Heart right ventricle (tissue), 16 donors: ENCODE measurements at regions of chr2 and their contacts with region 1.

Region 1: GRCh38 chr2:102251042-102251848 is 60.1 kb upstream of the IL1RL1 start:
- DNase-seq: peak in 1 of 2 donors; percentile 72
- ATAC-seq: peak; percentile 73 to 86 (median 81)
- H3K4me3 ChIP-seq: peak overlapping the region; percentile 12 to 62 (median 48)
- H3K27ac ChIP-seq: peak overlapping the region in 5 of 10 donors; percentile 7 to 64 (median 42)
- H3K4me1 ChIP-seq: peaks cover 3 to 30% (median 9%) of the 10 kb centered on the region in 9 donors
- H3K27me3 ChIP-seq: peaks cover 0 to 40% (median 13%) of the 10 kb centered on the region in 7 donors
- CTCF ChIP-seq: peak; percentile 21 to 78 (median 69)

Region 2: GRCh38 chr2:102301867-102302362 is 50.7 kb after region 1 on chr2:
- intact Hi-C with region 1: loop called in 1 of 10 experiments (anchors 5 kb)
- DNase-seq: peak in 1 of 2 donors; percentile 18
- ATAC-seq: peak; percentile 38 to 74 (median 54)
- H3K4me3 ChIP-seq: no peak overlapping the region
- H3K27ac ChIP-seq: no peak overlapping the region
- H3K4me1 ChIP-seq: peaks cover 0 to 22% (median 0%) of the 10 kb centered on the region in 9 donors
- H3K27me3 ChIP-seq: peaks cover 0 to 85% (median 10%) of the 10 kb centered on the region in 7 donors
- CTCF ChIP-seq: peak in 4 of 9 donors; percentile 28 to 55 (median 37)

Region 3: DNA sequence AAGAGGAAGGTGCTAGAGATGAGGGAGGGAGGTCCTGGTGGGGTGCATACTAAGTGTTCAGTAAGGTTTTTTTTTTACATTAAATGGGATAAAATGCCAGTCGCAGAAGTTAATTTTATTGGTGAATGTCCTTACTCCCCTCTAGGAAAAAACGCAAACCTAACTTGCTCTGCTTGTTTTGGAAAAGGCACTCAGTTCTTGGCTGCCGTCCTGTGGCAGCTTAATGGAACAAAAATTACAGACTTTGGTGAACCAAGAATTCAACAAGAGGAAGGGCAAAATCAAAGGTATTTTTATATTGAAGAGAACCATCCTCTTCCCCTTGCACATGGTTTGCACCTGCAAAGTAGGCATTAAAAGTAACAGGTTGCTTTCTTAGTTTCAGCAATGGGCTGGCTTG is 91.6 kb after region 1 on chr2:
- intact Hi-C with region 1: loop called in 4 of 10 experiments (anchors 5 kb)
- DNase-seq: no peak
- ATAC-seq: no peak
- H3K4me3 ChIP-seq: no peak overlapping the region
- H3K27ac ChIP-seq: no peak overlapping the region
- H3K4me1 ChIP-seq: peaks cover 0 to 4% (median 0%) of the 10 kb centered on the region in 9 donors
- H3K27me3 ChIP-seq: peaks cover 0 to 11% (median 0%) of the 10 kb centered on the region in 7 donors
- CTCF ChIP-seq: peak in 4 of 9 donors; percentile 9 to 44 (median 21)